GM12878 (cell line): ENCODE measurements at regions of chr11 and their contacts with region 1.

Region 1: GRCh38 chr11:78188286-78189173 is at the starts of genes KCTD21 and USP35:
- DNase-seq: peak; percentile 85
- ATAC-seq: peak; percentile 98
- H3K4me3 ChIP-seq: peak within 1 kb of the TSS; percentile 82
- H3K27ac ChIP-seq: 0 out of 2 replicates have a peak within 1 kb of the TSS, but pooled peaks have one; percentile 7
- H3K4me1 ChIP-seq: peaks cover 14% of the 10 kb centered on the region
- H3K27me3 ChIP-seq: no peaks in the 10 kb centered on the region
- CTCF ChIP-seq: no peak
- EP300 ChIP-seq: no peak
- POLR2A ChIP-seq: peak; percentile 80
- RAD21 ChIP-seq: no peak
- polyA plus RNA-seq, gene KCTD21: 0.63 to 0.73 TPM
- polyA plus RNA-seq, gene USP35: 0.13 TPM in 1 of 2 experiments, not detected in the other

Region 2: DNA sequence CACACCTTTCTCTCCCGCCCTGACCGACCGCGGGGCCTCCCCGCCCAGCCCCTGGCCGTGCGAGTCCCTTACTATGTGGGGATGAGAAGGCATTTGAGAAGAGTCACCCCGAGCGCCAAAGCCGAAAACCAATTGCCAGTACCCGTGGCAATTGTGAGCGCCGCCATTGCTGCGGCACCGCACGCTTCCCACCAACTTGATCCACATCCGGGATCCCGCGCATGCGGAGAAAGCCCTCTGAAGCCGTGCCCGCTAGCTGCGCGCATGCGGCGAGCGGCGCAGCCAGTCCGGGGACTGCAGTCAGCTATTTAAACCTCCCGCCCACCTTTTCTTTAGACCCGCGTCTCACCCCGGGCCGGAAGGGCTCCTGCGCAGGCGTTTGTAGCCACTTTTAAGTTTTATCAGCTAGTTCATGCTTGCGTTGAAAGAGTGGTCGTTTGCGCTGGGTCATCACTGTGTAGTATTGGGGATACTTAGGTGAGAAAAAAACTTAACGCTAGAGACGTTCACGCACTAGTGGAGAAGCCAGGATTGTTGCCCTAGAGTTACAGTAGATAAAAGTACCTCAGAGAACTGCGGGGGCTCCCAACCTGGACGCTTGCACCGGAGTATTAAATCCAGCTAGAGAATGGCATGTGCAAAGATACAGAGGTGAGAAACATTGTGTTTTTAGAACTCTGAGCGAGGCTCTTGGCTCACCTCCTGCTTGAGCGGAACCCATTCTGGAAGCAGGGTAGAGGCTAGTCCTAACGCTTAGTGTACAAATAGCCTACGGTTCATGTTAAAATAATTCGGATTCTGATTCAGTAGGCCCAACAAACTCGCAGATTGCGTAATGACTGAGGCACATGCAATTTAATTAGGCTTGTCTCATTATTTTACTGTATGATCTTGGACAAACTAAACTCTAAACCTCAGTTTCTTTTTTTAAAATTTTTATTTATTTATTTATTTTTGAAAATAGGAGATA is 48.8 kb before region 1 on chr11 and contains the start of gene ALG8:
- CTCF ChIA-PET with region 1: no interaction called
- POLR2A ChIA-PET with region 1: interaction called, 7 read pairs
- RAD21 ChIA-PET with region 1: interaction called, 8 read pairs
- SMC1A ChIA-PET with region 1: interaction called, 20 read pairs
- in situ Hi-C with region 1: no loop called
- intact Hi-C with region 1: loop called (anchors 1 kb)
- DNase-seq: peak; percentile 90
- ATAC-seq: peak; percentile 96
- H3K4me3 ChIP-seq: peak within 1 kb of the TSS; percentile 88
- H3K27ac ChIP-seq: peak within 1 kb of the TSS; percentile 82
- H3K4me1 ChIP-seq: peaks cover 11% of the 10 kb centered on the region
- H3K27me3 ChIP-seq: no peaks in the 10 kb centered on the region
- CTCF ChIP-seq: no peak
- EP300 ChIP-seq: 0 out of 4 replicates have a peak, but pooled peaks of 1 of the 2 experiments have one; percentile 11
- POLR2A ChIP-seq: peak; percentile 95
- RAD21 ChIP-seq: no peak
- polyA plus RNA-seq, gene ALG8: 79.1 to 105 TPM

Region 3: GRCh38 chr11:78223320-78223954 is 34.9 kb after region 1 on chr11:
- CTCF ChIA-PET with region 1: interaction called, 13 read pairs
- POLR2A ChIA-PET with region 1: interaction called, 3 read pairs
- RAD21 ChIA-PET with region 1: interaction called, 6 read pairs
- SMC1A ChIA-PET with region 1: interaction called, 3 read pairs
- in situ Hi-C with region 1: no loop called
- intact Hi-C with region 1: loop called (anchors 2 kb)
- DNase-seq: peak; percentile 62
- ATAC-seq: peak; percentile 90
- H3K4me3 ChIP-seq: no peak overlapping the region; the same call in 1 of the 2 replicates
- H3K27ac ChIP-seq: peak overlapping the region; percentile 76
- H3K4me1 ChIP-seq: peaks cover 58% of the 10 kb centered on the region
- H3K27me3 ChIP-seq: no peaks in the 10 kb centered on the region
- CTCF ChIP-seq: no peak
- EP300 ChIP-seq: peak in 1 of 2 experiments; percentile 64; a peak in 1 of 4 replicates
- POLR2A ChIP-seq: no peak
- RAD21 ChIP-seq: no peak

Region 4: DNA sequence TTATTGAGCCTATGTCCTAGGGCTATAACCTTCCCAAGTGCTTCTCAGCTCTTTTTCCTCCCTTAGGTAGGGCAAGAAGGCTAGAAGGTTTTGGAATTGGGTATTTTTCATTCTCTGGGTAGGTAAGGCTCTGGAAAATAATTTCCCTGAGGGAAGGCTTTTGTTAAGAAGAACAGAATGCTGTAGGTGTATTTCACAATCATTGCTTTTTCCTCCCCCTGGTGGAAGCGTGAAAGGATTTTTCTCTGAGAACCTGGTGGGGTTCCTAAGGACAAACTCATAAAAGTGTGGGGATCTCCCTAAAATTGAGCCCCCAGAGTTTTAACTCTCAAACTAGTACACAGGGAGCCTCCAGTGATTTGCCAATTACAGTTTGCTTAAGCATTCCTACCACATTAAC is 427.2 kb after region 1 on chr11:
- CTCF ChIA-PET with region 1: no interaction called
- POLR2A ChIA-PET with region 1: no interaction called
- RAD21 ChIA-PET with region 1: no interaction called
- SMC1A ChIA-PET with region 1: no interaction called
- in situ Hi-C with region 1: no loop called
- intact Hi-C with region 1: no loop called
- DNase-seq: no peak
- ATAC-seq: no peak
- H3K4me3 ChIP-seq: no peak overlapping the region
- H3K27ac ChIP-seq: no peak overlapping the region
- H3K4me1 ChIP-seq: no peaks in the 10 kb centered on the region
- H3K27me3 ChIP-seq: no peaks in the 10 kb centered on the region
- CTCF ChIP-seq: no peak
- EP300 ChIP-seq: no peak
- POLR2A ChIP-seq: no peak
- RAD21 ChIP-seq: no peak